Mammary epithelial cell (primary cell): ENCODE measurements at regions of chr7 and their contacts with region 1.

Region 1: GRCh38 chr7:79504712-79505389 is 51.4 kb upstream of the MAGI2 start:
- DNase-seq: no peak
- H3K4me3 ChIP-seq: no peak overlapping the region
- H3K27ac ChIP-seq: no peak overlapping the region
- H3K4me1 ChIP-seq: peaks cover 7% of the 10 kb centered on the region
- H3K27me3 ChIP-seq: no peaks in the 10 kb centered on the region
- CTCF ChIP-seq: no peak

Region 2: GRCh38 chr7:79337717-79338116 is 167.1 kb before region 1 on chr7:
- CTCF ChIA-PET with region 1: no interaction called
- dilution Hi-C with region 1: no loop called
- in situ Hi-C with region 1: no loop called
- intact Hi-C with region 1: no loop called
- DNase-seq: no peak
- H3K4me3 ChIP-seq: no peak overlapping the region
- H3K27ac ChIP-seq: no peak overlapping the region
- H3K4me1 ChIP-seq: no peaks in the 10 kb centered on the region
- H3K27me3 ChIP-seq: no peaks in the 10 kb centered on the region
- CTCF ChIP-seq: no peak

Region 3: DNA sequence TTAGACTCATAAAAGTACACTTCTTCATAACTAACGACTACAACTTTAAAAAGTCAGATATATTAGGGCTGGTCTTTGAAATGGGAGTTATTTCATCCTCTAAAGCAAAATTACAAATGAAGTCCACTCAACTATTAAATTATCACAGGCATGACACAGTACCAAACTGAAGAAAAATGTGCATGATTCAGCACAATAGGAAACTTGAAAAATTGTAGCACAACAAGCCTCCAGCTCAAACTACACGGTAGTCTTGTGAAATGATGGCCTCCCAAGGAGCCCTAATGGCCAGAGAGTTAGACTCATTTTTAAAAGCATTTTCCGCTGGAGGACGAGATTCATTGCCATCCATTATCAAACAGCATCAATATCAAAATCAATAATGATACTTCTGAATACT is 127.8 kb before region 1 on chr7:
- CTCF ChIA-PET with region 1: no interaction called
- dilution Hi-C with region 1: no loop called
- in situ Hi-C with region 1: no loop called
- intact Hi-C with region 1: no loop called
- DNase-seq: no peak
- H3K4me3 ChIP-seq: no peak overlapping the region
- H3K27ac ChIP-seq: no peak overlapping the region
- H3K4me1 ChIP-seq: no peaks in the 10 kb centered on the region
- H3K27me3 ChIP-seq: peaks cover under 1% of the 10 kb centered on the region
- CTCF ChIP-seq: no peak

Region 4: GRCh38 chr7:79741684-79742083 is 236.8 kb after region 1 on chr7:
- CTCF ChIA-PET with region 1: interaction called, 6 read pairs
- dilution Hi-C with region 1: no loop called
- in situ Hi-C with region 1: no loop called
- intact Hi-C with region 1: loop called (anchors 1 kb)
- DNase-seq: no peak
- H3K4me3 ChIP-seq: no peak overlapping the region
- H3K27ac ChIP-seq: no peak overlapping the region
- H3K4me1 ChIP-seq: no peaks in the 10 kb centered on the region
- H3K27me3 ChIP-seq: no peaks in the 10 kb centered on the region
- CTCF ChIP-seq: peak; percentile 42 to 56